ENCODE measurements at regions of chr14 and their contacts with region 1.

Region 1: DNA sequence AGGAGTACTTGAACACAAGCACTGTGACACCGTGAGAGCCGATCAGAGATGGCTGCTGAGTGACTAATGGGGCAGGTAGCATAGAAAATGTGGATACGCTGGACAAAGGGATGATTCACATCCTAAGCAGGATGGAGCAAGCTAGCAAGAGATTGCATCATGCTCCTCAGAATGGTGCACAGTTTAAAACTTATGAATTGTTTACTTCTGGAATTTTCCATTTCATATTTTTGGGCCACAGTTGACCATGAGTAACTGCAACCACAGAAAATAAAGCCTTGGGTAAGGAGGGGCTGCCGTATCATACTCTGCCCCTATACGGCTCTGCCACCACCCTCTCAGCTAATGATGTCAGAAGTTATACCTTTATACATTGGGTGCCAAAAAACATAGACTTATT is 23.3 kb upstream of the MARK3 start:
- DNase-seq: peak; percentile 97
- ATAC-seq: peak; percentile 98
- H3K4me3 ChIP-seq: no peak overlapping the region
- H3K27ac ChIP-seq: peak overlapping the region; percentile 90
- H3K4me1 ChIP-seq: peaks cover 16% of the 10 kb centered on the region
- H3K27me3 ChIP-seq: no peaks in the 10 kb centered on the region
- CTCF ChIP-seq: no peak

Region 2: DNA sequence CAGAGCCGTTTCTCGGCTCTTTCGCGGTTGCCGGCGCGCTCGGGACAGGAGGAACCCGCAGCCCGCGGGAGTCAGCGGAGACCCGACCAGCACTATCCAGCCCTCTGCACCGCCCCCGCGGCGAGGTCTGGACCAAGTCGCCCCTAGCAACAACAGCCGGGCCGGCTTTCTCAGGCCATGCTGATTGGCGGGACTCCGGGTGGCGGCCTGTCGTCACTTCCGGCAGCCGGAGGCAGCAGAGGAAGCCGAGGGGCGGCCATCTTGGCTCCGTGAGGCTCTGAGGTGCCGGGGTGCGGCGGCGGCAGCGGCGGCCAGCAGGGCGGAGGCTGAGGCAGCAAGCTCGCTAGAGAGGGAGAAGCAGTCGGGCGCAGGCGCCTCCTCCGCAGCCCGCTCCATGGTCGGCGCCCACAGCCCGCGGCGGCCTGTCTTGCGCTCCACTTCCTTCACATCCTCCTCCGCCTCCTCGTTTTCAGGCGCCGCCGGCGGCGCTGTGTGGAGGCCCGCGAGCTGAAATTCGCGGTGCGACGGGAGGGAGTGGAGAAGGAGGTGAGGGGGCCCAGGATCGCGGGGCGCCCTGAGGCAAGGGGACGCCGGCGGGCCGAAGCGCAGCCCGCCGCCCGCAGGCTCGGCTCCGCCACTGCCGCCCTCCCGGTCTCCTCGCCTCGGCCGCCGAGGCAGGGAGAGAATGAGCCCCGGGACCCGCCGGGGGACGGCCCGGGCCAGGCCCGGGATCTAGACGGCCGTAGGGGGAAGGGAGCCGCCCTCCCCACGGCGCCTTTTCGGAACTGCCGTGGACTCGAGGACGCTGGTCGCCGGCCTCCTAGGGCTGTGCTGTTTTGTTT is 23.5 kb after region 1 on chr14 and contains the start of gene MARK3:
- CTCF ChIA-PET with region 1: no interaction called
- POLR2A ChIA-PET with region 1: interaction called, 8 read pairs
- intact Hi-C with region 1: loop called (anchors 2 kb)
- DNase-seq: peak; percentile 97
- ATAC-seq: peak; percentile 97
- H3K4me3 ChIP-seq: peak within 1 kb of the TSS; percentile 98
- H3K27ac ChIP-seq: peak within 1 kb of the TSS; percentile 73
- H3K4me1 ChIP-seq: peaks cover 18% of the 10 kb centered on the region
- H3K27me3 ChIP-seq: no peaks in the 10 kb centered on the region
- CTCF ChIP-seq: peak; percentile 29; the same call in 1 of the 2 replicates
- total RNA-seq, gene MARK3: 69.9 and 73.4 TPM in 2 replicates